Right lobe of liver (tissue), 6 donors: ENCODE measurements at regions of chr1 and their contacts with region 1.

Region 1: DNA sequence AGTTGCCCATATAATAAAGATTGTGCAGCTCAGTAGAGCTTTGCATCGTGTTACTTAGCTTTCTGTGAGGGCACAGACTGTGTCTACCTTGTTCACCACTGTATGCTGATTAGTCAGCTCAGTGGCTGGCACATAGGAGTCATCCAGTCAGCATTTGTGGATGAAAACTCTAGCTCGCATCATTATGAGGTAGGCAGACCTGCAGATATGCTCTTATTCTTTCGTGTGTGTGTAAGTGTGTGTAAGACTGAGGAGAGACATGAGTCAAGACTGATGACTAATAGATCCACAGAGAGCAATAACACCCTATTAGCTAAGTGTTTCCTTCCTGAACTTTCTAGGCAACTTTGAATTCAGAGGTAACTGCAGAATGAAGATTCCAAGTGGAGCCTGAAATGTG is 17.1 kb downstream of the TTF2 start:
- DNase-seq: no peak
- ATAC-seq: no peak
- H3K4me3 ChIP-seq: no peak overlapping the region
- H3K27ac ChIP-seq: no peak overlapping the region
- H3K4me1 ChIP-seq: no peaks in the 10 kb centered on the region
- H3K27me3 ChIP-seq: no peaks in the 10 kb centered on the region
- CTCF ChIP-seq: no peak
- POLR2A ChIP-seq: no peak

Region 2: GRCh38 chr1:117121776-117122697 is 44.8 kb after region 1 on chr1:
- intact Hi-C with region 1: loop called in 1 of 2 experiments (anchors 10 kb)
- DNase-seq: peak; percentile 96 to 97 (median 97)
- ATAC-seq: peak; percentile 95 to 98 (median 95)
- H3K4me3 ChIP-seq: peak overlapping the region; percentile 67 to 77 (median 68)
- H3K27ac ChIP-seq: peak overlapping the region; percentile 65 to 82 (median 78)
- H3K4me1 ChIP-seq: peaks cover 0 to 13% (median 6%) of the 10 kb centered on the region in 4 donors
- H3K27me3 ChIP-seq: no peaks in the 10 kb centered on the region
- CTCF ChIP-seq: peak; percentile 56 to 80 (median 74)
- POLR2A ChIP-seq: no peak